ENCODE measurements at regions of chr1 and their contacts with region 1.

Region 1: GRCh38 chr1:111222308-111223125 is 5.0 kb upstream of the CHI3L2 start:
- DNase-seq: peak; percentile 75 to 95
- H3K4me3 ChIP-seq: no peak overlapping the region
- H3K4me1 ChIP-seq: peaks cover 24% of the 10 kb centered on the region
- H3K27me3 ChIP-seq: no peaks in the 10 kb centered on the region

Region 2: GRCh38 chr1:110840718-110841117 is 381.8 kb before region 1 on chr1:
- in situ Hi-C with region 1: no loop called
- DNase-seq: no peak
- H3K4me3 ChIP-seq: no peak overlapping the region
- H3K4me1 ChIP-seq: no peaks in the 10 kb centered on the region
- H3K27me3 ChIP-seq: no peaks in the 10 kb centered on the region

Region 3: DNA sequence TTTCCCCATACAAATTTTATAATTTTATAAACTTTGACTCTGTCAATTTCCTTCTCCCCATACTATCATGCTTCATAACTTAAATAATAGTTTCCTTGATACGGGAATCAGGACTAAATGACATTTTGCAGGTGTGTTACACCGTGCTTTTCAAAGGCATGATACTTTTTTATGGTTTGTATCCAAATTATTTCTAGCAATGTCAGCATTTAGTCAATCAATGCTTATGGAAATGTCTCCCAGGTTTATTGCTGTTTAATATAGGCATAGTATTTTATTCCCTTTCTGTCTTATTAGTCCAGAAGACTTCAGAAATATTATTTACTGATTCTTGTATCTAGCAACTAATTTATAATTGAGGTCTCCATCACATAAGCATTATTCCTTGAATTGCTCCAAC is 106.0 kb before region 1 on chr1:
- in situ Hi-C with region 1: no loop called
- DNase-seq: no peak
- H3K4me3 ChIP-seq: no peak overlapping the region
- H3K4me1 ChIP-seq: no peaks in the 10 kb centered on the region
- H3K27me3 ChIP-seq: no peaks in the 10 kb centered on the region

Region 4: GRCh38 chr1:111334169-111334568 is 111.7 kb after region 1 on chr1:
- in situ Hi-C with region 1: loop called (anchors 5 kb)
- DNase-seq: peak; percentile 74 to 75
- H3K4me3 ChIP-seq: no peak overlapping the region
- H3K4me1 ChIP-seq: no peaks in the 10 kb centered on the region
- H3K27me3 ChIP-seq: no peaks in the 10 kb centered on the region

Region 5: DNA sequence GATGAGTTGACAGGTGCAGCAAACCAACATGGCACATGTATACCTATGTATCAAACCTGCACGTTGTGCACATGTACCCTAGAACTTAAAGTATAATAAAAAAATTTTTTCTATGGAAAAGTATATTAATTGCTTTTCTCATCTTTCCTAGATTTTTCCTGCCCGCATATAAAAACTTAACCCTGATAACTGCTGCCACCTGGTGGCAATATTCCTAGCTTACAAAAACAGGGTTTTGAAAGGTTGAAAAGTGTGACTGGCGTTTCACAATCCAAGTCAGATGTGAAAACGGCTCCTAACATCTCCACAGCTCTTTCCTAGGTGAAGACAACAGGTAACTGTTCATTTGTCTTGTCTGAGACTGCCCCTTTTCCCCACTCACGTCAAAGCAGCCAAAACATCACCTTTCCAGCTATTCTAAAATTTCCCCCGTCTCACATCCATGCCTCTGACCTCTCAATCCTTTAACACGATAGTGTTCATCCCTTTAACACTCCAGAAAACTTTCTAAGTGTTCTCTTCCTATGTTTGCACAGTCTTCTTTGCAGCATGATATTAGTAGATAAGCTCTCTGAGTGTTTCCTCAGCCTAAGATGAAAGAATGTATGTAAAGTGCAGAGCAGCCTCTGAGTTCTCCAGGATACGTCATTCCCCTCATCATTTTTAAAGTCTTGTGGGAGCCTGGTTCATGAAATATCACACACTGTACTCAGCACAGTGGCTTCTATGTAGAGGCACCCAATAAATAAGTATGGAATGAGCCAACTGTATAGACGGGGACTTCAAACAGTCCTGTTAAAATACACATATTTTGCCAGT is 177.5 kb after region 1 on chr1:
- in situ Hi-C with region 1: loop called (anchors 5 kb)
- DNase-seq: peak; percentile 59 to 77
- H3K4me3 ChIP-seq: no peak overlapping the region
- H3K4me1 ChIP-seq: peaks cover 8% of the 10 kb centered on the region
- H3K27me3 ChIP-seq: 0 out of 2 replicates have a peak, but pooled peaks cover 3% of the 10 kb centered on the region